CD8-positive, alpha-beta T cell (primary cell): ENCODE measurements at regions of chr10 and their contacts with region 1.

Region 1: DNA sequence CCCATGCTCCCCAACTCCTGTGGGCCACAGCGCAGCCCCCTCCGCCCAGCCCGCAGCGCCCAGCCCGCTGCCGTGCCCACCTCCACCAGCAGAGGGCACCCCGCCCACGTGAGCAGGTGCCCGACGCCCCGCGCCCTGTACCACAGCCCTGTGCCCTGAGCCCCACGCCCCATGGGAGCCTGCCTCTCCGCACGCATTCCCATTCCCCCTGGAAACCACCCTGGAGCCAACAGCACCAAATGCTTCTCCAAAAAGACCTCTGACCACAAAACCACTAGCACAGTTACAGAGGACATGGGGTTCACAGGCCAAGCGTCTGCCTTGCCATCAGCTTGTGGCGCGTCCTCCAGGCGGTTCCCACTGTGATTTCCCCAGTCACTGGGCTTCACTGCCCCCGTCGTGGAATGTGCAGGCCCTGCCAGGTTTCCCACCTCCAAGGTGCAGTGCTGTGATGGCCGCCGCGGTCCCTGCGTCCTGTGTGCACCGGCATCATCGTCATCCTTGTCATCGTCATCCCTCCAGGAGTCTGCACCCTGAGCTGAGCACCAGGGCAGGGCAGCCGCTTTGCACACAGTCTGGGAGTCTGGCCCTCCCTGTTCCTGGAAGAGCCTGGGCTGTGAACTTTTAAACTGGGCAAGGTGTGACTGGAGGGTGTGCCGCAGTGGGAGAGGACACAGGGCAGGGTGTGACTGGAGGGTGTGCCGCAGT is 61.7 kb downstream of the PWWP2B start:
- DNase-seq: peak; percentile 44 to 84 (median 69)
- ATAC-seq: peak; percentile 90
- H3K4me3 ChIP-seq: no peak overlapping the region
- H3K4me3 Mint-ChIP-seq: no peak overlapping the region
- H3K27ac ChIP-seq: no peak overlapping the region
- H3K27ac Mint-ChIP-seq: no peak overlapping the region
- H3K4me1 ChIP-seq: peaks cover 4% of the 10 kb centered on the region
- H3K4me1 Mint-ChIP-seq: peaks cover 2% of the 10 kb centered on the region
- H3K27me3 ChIP-seq: peaks cover 0 to 3% of the 10 kb centered on the region in 2 experiments
- H3K27me3 Mint-ChIP-seq: no peaks in the 10 kb centered on the region
- CTCF ChIP-seq: peak; percentile 78

Region 2: GRCh38 chr10:132313865-132314264 is 144.9 kb before region 1 on chr10:
- CTCF ChIA-PET with region 1: no interaction called
- POLR2A ChIA-PET with region 1: no interaction called
- intact Hi-C with region 1: no loop called
- DNase-seq: no peak
- ATAC-seq: no peak
- H3K4me3 ChIP-seq: no peak overlapping the region
- H3K4me3 Mint-ChIP-seq: no peak overlapping the region
- H3K27ac ChIP-seq: no peak overlapping the region
- H3K27ac Mint-ChIP-seq: no peak overlapping the region
- H3K4me1 ChIP-seq: peaks cover 4% of the 10 kb centered on the region
- H3K4me1 Mint-ChIP-seq: peaks cover 5% of the 10 kb centered on the region
- H3K27me3 ChIP-seq: no peaks in the 10 kb centered on the region
- H3K27me3 Mint-ChIP-seq: no peaks in the 10 kb centered on the region
- CTCF ChIP-seq: no peak

Region 3: GRCh38 chr10:132470410-132471124 is 11.8 kb after region 1 on chr10:
- CTCF ChIA-PET with region 1: interaction called, 10 read pairs
- POLR2A ChIA-PET with region 1: no interaction called
- intact Hi-C with region 1: no loop called
- DNase-seq: no peak
- ATAC-seq: no peak
- H3K4me3 ChIP-seq: no peak overlapping the region
- H3K4me3 Mint-ChIP-seq: no peak overlapping the region
- H3K27ac ChIP-seq: no peak overlapping the region
- H3K27ac Mint-ChIP-seq: no peak overlapping the region
- H3K4me1 ChIP-seq: no peaks in the 10 kb centered on the region
- H3K4me1 Mint-ChIP-seq: no peaks in the 10 kb centered on the region
- H3K27me3 ChIP-seq: no peaks in the 10 kb centered on the region
- H3K27me3 Mint-ChIP-seq: peaks cover 4% of the 10 kb centered on the region
- CTCF ChIP-seq: no peak

Region 4: DNA sequence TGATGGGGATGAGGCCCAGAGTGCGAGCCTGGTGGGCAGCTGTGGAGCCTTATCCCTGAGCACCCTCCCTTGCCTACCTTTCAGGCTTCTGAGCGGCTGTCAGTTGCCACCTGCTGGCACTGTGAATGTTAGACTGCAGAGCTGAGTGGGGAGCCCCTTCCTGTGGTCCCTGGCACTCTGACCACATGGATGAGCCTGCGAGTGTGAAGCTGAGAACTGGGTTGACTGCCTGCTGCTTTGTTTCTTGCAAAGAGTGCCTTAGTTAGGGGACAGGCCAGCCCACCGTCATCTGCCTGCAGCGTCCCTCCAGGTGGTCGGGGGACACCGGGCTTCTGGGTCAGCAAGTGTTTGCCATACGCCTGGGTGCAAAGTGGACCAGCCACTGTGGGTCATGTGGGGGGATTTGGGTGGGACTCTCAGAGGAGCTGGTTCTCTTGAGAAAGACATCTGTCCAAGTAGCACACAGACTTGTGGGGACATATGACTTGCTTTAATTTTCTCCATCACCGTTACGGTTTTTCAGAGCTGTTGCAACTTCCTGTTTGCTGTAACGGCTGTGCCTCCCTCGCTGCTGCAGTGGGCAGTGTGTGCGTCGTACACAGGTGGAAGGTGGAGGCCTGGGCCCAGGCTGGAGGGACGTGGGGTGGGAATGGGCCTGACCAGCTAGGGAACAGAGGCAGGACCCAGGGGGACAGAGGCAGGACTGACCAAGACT is 92.5 kb after region 1 on chr10:
- CTCF ChIA-PET with region 1: interaction called, 10 read pairs
- POLR2A ChIA-PET with region 1: no interaction called
- intact Hi-C with region 1: loop called in 1 of 2 experiments (anchors 2 kb)
- DNase-seq: peak in 4 of 9 experiments; percentile 33 to 70 (median 55)
- ATAC-seq: peak; percentile 48
- H3K4me3 ChIP-seq: peak overlapping the region; percentile 21 to 26
- H3K4me3 Mint-ChIP-seq: peak overlapping the region; percentile 74
- H3K27ac ChIP-seq: no peak overlapping the region
- H3K27ac Mint-ChIP-seq: peak overlapping the region; percentile 90
- H3K4me1 ChIP-seq: peaks cover 49% of the 10 kb centered on the region
- H3K4me1 Mint-ChIP-seq: peaks cover 40% of the 10 kb centered on the region
- H3K27me3 ChIP-seq: no peaks in the 10 kb centered on the region
- H3K27me3 Mint-ChIP-seq: no peaks in the 10 kb centered on the region
- CTCF ChIP-seq: peak; percentile 31

Region 5: DNA sequence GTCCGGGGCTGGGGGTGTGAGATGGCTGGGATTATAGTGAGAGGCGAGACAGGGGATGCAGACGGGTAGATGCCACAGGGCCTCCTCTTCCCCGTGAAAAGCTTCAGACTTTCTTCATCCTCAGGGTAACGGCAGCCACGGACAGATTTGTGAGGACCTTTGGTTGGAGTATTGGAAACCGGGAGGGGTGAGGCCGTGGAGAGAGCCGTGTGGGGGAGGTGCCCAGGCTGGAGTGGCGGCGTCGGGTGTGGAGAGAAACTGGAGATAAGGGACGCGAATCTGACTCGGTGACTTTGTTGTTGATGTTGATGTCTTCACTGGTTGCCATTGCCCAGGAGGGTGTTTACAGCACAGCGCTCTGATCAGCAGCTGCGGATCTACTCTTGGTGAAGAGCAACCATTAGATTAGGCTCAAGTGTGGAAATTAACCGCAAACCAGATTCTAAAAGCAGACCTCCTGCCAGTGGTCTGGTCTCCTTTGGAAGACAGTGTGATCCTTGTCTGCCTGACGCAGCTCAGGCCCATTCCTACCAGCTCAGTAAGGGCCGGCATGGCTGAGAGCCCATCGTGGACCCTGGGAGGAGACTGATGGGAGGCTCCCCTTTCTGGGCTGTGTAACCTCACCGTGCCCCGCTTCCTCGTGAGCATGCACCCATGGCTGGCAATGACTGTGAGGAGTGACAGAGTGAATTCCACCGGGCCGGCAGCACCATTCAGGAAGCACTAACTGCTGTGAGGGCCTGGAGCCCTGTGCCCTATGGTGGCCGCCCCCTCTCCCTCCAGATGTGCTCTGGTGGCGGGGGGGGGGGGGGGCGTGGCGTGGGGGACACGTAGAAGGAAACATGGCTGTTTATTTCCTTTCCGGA is 169.2 kb after region 1 on chr10:
- CTCF ChIA-PET with region 1: interaction called, 51 read pairs
- POLR2A ChIA-PET with region 1: no interaction called
- intact Hi-C with region 1: no loop called
- DNase-seq: no peak
- ATAC-seq: peak; percentile 26
- H3K4me3 ChIP-seq: no peak overlapping the region
- H3K4me3 Mint-ChIP-seq: no peak overlapping the region
- H3K27ac ChIP-seq: no peak overlapping the region
- H3K27ac Mint-ChIP-seq: peak overlapping the region; percentile 62
- H3K4me1 ChIP-seq: no peaks in the 10 kb centered on the region
- H3K4me1 Mint-ChIP-seq: peaks cover 39% of the 10 kb centered on the region
- H3K27me3 ChIP-seq: no peaks in the 10 kb centered on the region
- H3K27me3 Mint-ChIP-seq: no peaks in the 10 kb centered on the region
- CTCF ChIP-seq: no peak

Region 6: GRCh38 chr10:132637477-132638129 is 178.9 kb after region 1 on chr10:
- CTCF ChIA-PET with region 1: interaction called, 51 read pairs
- POLR2A ChIA-PET with region 1: no interaction called
- intact Hi-C with region 1: loop called in 1 of 2 experiments (anchors 1 kb)
- DNase-seq: peak in 3 of 9 experiments; percentile 26 to 70 (median 61)
- ATAC-seq: peak; percentile 72
- H3K4me3 ChIP-seq: no peak overlapping the region
- H3K4me3 Mint-ChIP-seq: no peak overlapping the region
- H3K27ac ChIP-seq: no peak overlapping the region
- H3K27ac Mint-ChIP-seq: no peak overlapping the region
- H3K4me1 ChIP-seq: peaks cover 4% of the 10 kb centered on the region
- H3K4me1 Mint-ChIP-seq: peaks cover 28% of the 10 kb centered on the region
- H3K27me3 ChIP-seq: no peaks in the 10 kb centered on the region
- H3K27me3 Mint-ChIP-seq: no peaks in the 10 kb centered on the region
- CTCF ChIP-seq: peak; percentile 67